Left lung (tissue), 14 donors: ENCODE measurements at regions of chr2 and their contacts with region 1.

Region 1: DNA sequence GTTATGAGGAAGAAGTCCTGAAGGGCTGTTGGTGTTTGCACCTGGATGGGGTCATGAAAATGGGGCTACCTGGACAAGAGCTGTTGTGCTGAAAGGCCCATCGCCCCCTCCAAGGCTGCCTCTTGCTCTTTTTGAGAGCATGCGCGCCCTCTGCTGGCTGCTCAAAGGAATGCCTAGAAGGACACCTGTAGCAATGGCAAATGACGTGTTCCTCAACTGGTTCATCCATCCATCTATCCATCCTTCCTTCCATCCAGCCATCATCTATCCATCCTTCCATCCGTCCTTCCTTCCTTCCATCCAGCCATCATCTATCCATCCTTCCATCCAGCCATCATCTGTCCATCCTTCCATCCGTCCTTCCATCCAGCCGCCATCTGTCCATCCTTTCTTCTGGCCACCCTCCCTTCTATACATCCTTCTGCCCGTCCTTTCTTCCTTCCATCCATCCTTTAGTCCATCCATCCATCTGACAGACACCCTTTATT is 17.2 kb upstream of the RPL31 start:
- DNase-seq: peak; percentile 56 to 92 (median 78)
- ATAC-seq: peak; percentile 87
- H3K4me3 ChIP-seq: no peak overlapping the region
- H3K27ac ChIP-seq: no peak overlapping the region
- H3K4me1 ChIP-seq: no peaks in the 10 kb centered on the region
- H3K27me3 ChIP-seq: no peaks in the 10 kb centered on the region
- CTCF ChIP-seq: peak; percentile 86 to 90

Region 2: DNA sequence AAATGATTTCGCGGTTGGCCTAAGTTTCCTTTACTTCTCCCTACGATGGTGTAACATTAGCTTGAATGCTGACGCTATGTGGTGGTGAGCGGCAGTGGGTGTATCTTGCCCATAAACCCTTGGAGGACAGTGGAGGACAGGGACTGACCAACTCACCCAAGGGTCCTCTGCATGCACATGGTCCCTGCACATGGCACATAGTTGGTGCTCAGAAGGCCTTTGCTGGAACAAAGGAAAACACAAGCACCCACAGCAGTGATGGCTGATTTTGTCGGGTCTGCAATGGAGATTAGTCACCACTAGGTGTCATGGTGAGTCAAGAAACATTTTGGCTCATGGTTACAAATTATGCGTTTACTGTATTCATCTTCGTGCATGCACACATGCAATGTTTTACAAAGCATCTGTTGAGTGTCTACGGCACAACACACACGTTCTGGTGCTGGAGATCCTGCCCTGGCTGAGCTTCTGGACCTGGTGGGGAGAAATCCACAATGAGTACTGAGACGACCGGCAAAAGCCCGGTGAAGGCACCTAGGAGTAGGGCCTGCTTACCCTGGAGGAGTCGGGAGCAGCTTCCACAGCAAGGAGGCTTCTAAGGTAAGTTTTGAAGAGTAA is 378.1 kb before region 1 on chr2:
- intact Hi-C with region 1: loop called in 1 of 2 experiments (anchors 5 kb)
- DNase-seq: peak in 2 of 4 donors; percentile 27 to 33
- ATAC-seq: peak; percentile 73
- H3K4me3 ChIP-seq: no peak overlapping the region
- H3K27ac ChIP-seq: no peak overlapping the region
- H3K4me1 ChIP-seq: no peaks in the 10 kb centered on the region
- H3K27me3 ChIP-seq: no peaks in the 10 kb centered on the region
- CTCF ChIP-seq: peak; percentile 79 to 81

Region 3: DNA sequence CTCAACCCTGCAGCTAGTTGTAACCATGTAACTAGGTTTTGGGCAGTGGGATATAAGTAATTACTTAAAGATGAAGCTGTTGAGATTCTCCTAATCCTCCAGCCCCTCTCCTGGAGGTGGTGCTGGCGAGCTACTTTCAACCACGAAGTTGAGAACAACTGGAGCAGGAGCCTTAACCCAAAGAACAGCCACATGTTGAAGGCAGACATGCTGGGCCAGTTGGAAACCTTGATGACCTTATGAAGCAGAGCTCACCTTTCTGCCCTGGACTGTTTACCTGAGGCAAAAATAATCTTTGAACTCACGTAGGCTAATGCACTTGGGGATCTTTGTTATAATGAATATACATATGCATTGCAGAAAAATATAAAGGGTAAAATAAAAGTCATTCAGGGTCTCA is 254.6 kb before region 1 on chr2:
- intact Hi-C with region 1: loop called in 1 of 2 experiments (anchors 5 kb)
- DNase-seq: peak in 2 of 4 donors; percentile 28 to 50
- ATAC-seq: peak; percentile 94
- H3K4me3 ChIP-seq: no peak overlapping the region
- H3K27ac ChIP-seq: no peak overlapping the region
- H3K4me1 ChIP-seq: no peaks in the 10 kb centered on the region
- H3K27me3 ChIP-seq: peaks cover 0 to 3% of the 10 kb centered on the region in 2 donors
- CTCF ChIP-seq: peak; percentile 48 to 56

Region 4: GRCh38 chr2:101094351-101094750 is 109.4 kb after region 1 on chr2:
- intact Hi-C with region 1: no loop called
- DNase-seq: no peak
- ATAC-seq: no peak
- H3K4me3 ChIP-seq: no peak overlapping the region
- H3K27ac ChIP-seq: no peak overlapping the region
- H3K4me1 ChIP-seq: peaks cover 0 to 14% of the 10 kb centered on the region in 2 donors
- H3K27me3 ChIP-seq: no peaks in the 10 kb centered on the region
- CTCF ChIP-seq: no peak

Region 5: GRCh38 chr2:101124643-101125366 is 139.9 kb after region 1 on chr2:
- intact Hi-C with region 1: no loop called
- DNase-seq: peak in 1 of 4 donors; percentile 54
- ATAC-seq: peak; percentile 77
- H3K4me3 ChIP-seq: no peak overlapping the region
- H3K27ac ChIP-seq: peak overlapping the region; percentile 53 to 67
- H3K4me1 ChIP-seq: peaks cover 21 to 73% of the 10 kb centered on the region in 2 donors
- H3K27me3 ChIP-seq: no peaks in the 10 kb centered on the region
- CTCF ChIP-seq: no peak

Region 6: GRCh38 chr2:101818531-101819451 is 833.9 kb after region 1 on chr2:
- intact Hi-C with region 1: no loop called
- DNase-seq: peak in 2 of 4 donors; percentile 47 to 69
- ATAC-seq: no peak
- H3K4me3 ChIP-seq: no peak overlapping the region
- H3K27ac ChIP-seq: no peak overlapping the region
- H3K4me1 ChIP-seq: peaks cover 5 to 33% of the 10 kb centered on the region in 2 donors
- H3K27me3 ChIP-seq: no peaks in the 10 kb centered on the region
- CTCF ChIP-seq: no peak